Activated CD4-positive, alpha-beta T cell treated with anti-CD3 and anti-CD28 coated beads for 36 hours (primary cell): ENCODE measurements at regions of chr14 and their contacts with region 1.

Region 1: GRCh38 chr14:68795597-68796417 is 2.9 kb upstream of the ZFP36L1 start:
- DNase-seq: peak; percentile 90
- ATAC-seq: peak; percentile 53
- H3K4me3 Mint-ChIP-seq: peak overlapping the region; percentile 90
- H3K27ac Mint-ChIP-seq: peak overlapping the region; percentile 100
- H3K4me1 Mint-ChIP-seq: peaks cover 51% of the 10 kb centered on the region
- H3K27me3 Mint-ChIP-seq: no peaks in the 10 kb centered on the region

Region 2: GRCh38 chr14:67695394-67695949 is 1100.3 kb before region 1 on chr14 and contains the start of gene RDH11:
- CTCF ChIA-PET with region 1: no interaction called
- POLR2A ChIA-PET with region 1: no interaction called
- intact Hi-C with region 1: loop called in 1 of 2 experiments (anchors 10 kb)
- DNase-seq: peak; percentile 92
- ATAC-seq: peak; percentile 88
- H3K4me3 Mint-ChIP-seq: peak within 1 kb of the TSS; percentile 91
- H3K27ac Mint-ChIP-seq: peak within 1 kb of the TSS; percentile 98
- H3K4me1 Mint-ChIP-seq: peaks cover 21% of the 10 kb centered on the region
- H3K27me3 Mint-ChIP-seq: no peaks in the 10 kb centered on the region
- total RNA-seq, gene RDH11: 72.0 to 75.6 TPM

Region 3: GRCh38 chr14:68232300-68233055 is 563.3 kb before region 1 on chr14:
- CTCF ChIA-PET with region 1: no interaction called
- POLR2A ChIA-PET with region 1: interaction called, 3 read pairs
- intact Hi-C with region 1: loop called (anchors 5 kb)
- DNase-seq: peak; percentile 62
- ATAC-seq: peak; percentile 83
- H3K4me3 Mint-ChIP-seq: no peak overlapping the region
- H3K27ac Mint-ChIP-seq: no peak overlapping the region
- H3K4me1 Mint-ChIP-seq: peaks cover 23% of the 10 kb centered on the region
- H3K27me3 Mint-ChIP-seq: no peaks in the 10 kb centered on the region

Region 4: GRCh38 chr14:68685419-68686204 is 110.2 kb before region 1 on chr14:
- CTCF ChIA-PET with region 1: interaction called, 16 read pairs
- POLR2A ChIA-PET with region 1: interaction called, 13 read pairs
- intact Hi-C with region 1: loop called in 1 of 2 experiments (anchors 1 kb)
- DNase-seq: peak; percentile 86
- ATAC-seq: peak; percentile 87
- H3K4me3 Mint-ChIP-seq: peak overlapping the region; percentile 31
- H3K27ac Mint-ChIP-seq: peak overlapping the region; percentile 81
- H3K4me1 Mint-ChIP-seq: peaks cover 57% of the 10 kb centered on the region
- H3K27me3 Mint-ChIP-seq: no peaks in the 10 kb centered on the region

Region 5: DNA sequence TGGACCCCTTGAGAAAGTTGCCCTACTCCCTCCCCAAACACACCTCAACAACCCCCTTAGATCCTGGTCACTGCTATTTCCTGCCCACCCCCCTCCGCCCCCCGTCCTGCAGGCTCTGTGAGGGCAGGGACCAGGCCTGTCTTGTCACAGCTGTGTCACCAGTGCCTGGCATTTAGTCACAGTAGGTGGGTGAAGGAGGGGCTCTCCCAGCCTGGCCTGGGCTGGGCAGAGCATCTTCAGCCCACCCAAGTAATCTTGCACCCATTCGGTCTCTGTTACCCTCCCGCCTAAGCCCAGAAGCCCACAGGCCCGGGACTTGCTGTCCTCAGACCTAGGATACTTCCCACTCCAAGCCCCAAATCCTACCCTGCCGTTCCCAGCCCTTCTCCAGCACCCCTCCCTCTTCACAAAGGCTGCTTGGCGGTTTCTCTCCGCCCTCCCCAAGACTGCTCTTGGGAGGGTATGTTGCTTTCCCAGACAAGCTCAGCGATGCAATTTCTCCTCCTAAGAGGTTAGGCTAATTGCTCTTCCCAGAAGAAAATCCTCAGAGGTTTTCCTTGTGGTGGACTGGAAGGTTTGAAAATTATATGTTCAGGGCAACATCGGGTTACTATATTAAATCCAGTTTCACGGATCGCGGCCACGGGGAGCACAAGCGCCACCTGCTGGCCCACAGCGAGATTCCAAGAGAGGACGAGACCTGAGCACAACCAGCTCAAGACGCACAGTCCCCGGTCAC is 47.8 kb after region 1 on chr14:
- CTCF ChIA-PET with region 1: no interaction called
- POLR2A ChIA-PET with region 1: no interaction called
- intact Hi-C with region 1: loop called in 1 of 2 experiments (anchors 2 kb)
- DNase-seq: peak; percentile 87
- ATAC-seq: peak; percentile 63
- H3K4me3 Mint-ChIP-seq: no peak overlapping the region
- H3K27ac Mint-ChIP-seq: peak overlapping the region; percentile 11
- H3K4me1 Mint-ChIP-seq: peaks cover 25% of the 10 kb centered on the region
- H3K27me3 Mint-ChIP-seq: peaks cover 5% of the 10 kb centered on the region

Region 6: GRCh38 chr14:69398053-69398817 is 602.4 kb after region 1 on chr14 and contains the starts of genes ERH and SLC39A9:
- CTCF ChIA-PET with region 1: no interaction called
- POLR2A ChIA-PET with region 1: no interaction called
- intact Hi-C with region 1: loop called in 1 of 2 experiments (anchors 2 kb)
- DNase-seq: peak; percentile 97
- ATAC-seq: peak; percentile 89
- H3K4me3 Mint-ChIP-seq: peak within 1 kb of the TSS; percentile 95
- H3K27ac Mint-ChIP-seq: peak within 1 kb of the TSS; percentile 100
- H3K4me1 Mint-ChIP-seq: peaks cover 63% of the 10 kb centered on the region
- H3K27me3 Mint-ChIP-seq: no peaks in the 10 kb centered on the region
- total RNA-seq, gene ERH: 343 to 385 TPM
- total RNA-seq, gene SLC39A9: 40.1 to 42.6 TPM